Left cardiac atrium (tissue), 4 donors: ENCODE measurements at regions of chr5 and their contacts with region 1.

Region 1: DNA sequence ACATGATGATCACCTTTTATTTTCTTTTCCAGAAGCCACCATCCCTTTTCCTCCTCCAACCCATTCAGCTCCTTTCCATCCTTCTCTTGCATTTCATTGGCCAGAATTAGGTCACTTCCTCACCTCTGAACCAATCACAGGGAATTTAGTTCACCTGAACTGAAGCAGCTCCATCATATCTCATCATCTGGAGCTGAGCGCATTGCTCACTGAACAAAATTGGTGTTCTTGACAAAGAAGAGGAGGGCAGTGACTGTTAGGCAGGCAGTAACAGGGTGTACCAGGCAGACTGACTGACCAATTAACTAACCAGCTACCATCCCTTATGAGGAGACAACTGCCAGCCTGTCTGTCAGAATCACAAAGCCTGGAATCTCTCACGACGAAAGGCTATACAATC is 1.8 kb upstream of the ZNF354A start:
- DNase-seq: no peak
- ATAC-seq: peak in 1 of 2 donors; percentile 9

Region 2: DNA sequence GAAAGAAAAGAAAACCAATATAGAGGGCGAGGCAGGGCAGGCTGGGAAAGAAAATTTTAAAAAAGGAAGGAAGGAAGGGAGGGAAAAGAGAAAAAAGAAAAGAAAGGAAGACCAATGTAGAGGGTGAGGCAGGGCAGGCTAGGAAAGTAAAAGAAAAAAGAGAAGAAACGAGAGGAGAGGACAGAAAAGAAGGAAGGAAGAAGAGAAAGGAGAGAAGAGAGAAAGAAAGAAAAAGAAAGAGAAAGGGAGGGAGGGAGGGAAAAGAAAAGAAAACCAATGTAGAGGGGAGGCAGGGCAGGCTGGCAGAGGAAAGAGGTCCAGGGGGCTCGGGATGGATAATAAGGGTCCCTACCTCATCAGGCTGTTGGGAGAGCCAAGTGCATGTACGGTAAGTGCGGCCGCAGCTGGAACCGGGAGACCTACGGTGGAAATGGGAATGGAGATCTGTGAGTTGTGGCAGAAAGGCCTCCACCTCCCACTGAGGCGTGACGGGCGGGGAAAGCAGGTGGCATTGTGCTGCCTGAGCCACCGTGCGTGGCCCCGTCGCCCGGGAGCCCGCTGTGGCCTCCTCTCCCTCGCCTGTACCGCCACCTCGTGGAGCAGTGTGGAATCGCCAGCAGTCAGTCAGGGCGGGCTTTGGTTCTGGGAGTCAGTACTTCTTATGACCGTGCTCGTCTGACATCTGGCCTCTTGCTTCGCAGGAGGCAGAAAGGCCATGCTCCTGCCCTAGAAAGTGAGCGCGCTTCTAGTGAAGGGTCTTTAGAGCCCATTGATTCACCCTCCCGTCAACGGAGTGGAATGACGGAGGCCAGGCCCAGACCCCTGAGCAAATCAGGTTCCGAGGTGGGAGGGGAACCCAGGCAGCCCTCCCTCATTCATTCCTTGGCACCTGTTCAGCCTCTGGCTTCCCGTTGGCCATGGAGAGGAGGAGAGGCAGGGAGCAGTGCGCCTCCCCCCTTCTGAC is 568.2 kb before region 1 on chr5:
- intact Hi-C with region 1: no loop called
- DNase-seq: peak; percentile 81
- ATAC-seq: peak; percentile 94 to 97

Region 3: DNA sequence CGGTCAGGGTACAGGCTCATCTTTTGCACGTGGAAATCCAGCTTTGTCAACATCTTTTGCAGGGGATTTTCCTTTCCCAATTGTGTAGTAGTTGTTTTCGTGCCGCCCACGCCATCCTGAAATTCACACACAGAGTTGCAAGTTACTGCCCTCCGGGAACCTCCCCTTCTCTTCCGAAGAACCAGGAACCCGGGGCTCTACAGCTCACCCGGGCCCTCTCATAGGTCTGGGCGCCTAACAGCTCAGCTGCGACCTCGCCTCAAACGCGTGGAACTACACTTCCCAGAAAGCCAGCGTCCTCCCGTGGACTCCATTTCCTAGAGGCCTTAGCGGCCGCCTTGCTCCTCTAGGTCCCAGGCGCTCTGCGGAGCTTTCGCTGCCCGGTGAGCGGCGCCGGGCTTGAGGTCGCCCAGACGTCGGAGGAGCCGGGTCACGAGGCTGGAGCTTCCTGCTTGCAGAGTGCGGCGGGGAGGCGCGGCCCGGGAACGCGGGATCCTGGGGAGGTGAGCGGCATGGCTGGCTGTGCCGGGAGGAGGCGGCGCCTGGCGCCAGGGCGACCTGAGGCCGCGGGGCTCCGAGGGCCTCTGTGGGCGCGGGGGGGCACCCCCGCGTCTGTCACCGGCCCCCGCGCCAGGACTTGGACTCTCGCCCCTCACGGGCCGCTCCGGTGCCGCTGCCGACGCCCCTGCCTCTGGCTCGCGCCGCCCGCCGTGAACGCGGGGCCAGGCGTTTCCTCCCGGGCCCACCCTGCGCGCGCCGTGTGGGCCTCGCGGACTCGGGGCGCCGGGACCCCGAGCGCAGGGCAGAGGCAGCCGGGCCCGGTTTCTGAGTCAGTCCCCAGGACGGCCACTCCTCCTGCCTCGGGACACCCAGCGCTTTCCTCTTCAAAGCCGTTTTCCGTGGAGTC is 127.6 kb after region 1 on chr5 and contains the start of gene ZNF354B:
- intact Hi-C with region 1: loop called in 1 of 2 experiments (anchors 2 kb)
- DNase-seq: peak; percentile 92
- ATAC-seq: peak; percentile 98 to 99
- total RNA-seq, gene ZNF354B: 8.2 to 9.2 TPM

Region 4: DNA sequence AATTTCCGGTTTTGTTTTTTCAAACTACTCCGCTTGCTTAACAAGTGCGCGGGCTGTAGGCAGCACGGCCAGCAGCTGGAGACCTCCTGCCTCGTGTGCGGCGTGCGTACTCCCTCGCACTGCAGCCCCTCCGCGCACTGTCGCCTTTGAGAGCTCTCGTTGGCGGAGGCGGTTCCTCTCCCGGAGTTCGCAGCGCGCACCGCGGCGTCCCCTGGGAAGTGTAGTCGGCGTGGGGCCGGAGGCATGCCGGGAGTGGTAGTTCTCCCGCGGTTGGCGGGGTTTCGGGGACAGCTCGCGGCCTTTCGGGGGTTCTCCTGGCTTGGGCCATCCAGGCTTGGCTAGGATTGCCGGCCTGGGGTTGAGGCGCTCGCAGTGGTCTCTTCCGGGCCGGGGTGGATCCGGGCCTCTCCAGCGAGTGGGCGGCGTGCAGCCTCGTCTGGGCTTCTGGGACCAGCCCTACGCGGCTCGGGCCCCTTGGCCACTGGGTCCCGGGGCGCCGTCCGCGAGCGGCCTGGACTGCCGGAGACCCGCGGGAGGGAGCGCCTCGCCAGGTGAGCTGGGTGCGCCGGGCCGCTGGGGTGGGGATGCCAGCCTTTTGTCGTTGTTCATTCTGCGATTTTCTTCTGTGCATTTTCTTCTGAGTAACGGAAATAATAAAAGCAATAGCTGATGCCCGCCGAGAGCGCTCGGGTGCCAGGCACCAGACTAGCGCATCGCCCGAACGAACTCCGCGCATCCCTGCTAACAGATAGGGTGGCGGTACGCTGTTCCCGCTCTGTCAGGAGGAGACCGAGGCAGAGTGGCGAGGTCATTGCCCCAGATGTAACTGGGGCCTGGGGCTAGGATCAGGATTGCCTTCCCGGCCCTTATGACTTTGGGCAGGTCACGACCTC is 328.1 kb after region 1 on chr5 and contains the start of gene ZNF354C:
- intact Hi-C with region 1: loop called in 1 of 2 experiments (anchors 5 kb)
- DNase-seq: peak; percentile 93
- ATAC-seq: peak; percentile 99 to 100
- total RNA-seq, gene ZNF354C: 3.9 to 4.9 TPM

Region 5: GRCh38 chr5:179495906-179496455 is 763.7 kb after region 1 on chr5:
- intact Hi-C with region 1: loop called in 1 of 2 experiments (anchors 10 kb)
- DNase-seq: no peak
- ATAC-seq: no peak